ENCODE measurements at regions of chr9 and their contacts with region 1.

Region 1: DNA sequence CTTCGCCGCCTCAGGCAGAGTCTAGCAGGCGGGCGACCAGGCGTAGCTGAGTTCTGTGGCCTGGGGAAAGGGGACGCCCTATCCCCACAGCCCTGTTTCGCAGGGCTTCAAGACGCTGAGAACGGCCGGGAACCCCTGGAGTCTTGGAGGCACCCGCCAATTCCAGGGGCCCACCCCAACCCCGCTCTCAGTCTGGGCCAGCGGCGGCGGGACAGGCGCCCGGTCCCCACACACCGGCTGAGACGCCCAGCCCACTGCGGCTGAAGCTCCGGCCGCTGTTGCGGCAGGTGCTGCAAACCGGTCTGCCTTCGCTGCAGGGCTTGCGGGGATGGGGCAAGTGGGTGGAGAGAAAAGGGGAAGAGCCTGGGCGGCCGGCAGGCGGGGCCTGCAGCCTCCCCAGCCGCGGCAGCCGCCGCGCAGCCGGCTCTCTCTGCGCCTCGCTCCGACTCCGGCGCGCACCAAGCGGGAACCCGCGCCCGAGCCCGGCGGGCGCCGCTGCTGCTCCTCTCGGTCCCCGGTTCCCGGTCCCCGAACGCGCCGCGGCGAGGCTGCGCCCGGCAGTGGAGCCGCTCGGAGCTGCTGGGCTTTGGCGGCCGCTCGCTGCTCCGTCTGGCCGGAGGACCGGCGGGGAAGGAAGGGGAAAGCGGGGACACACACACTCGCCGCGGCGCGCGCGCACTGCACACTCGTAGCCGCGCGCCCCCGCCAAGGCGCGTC is at the start of gene PIP5K1B:
- DNase-seq: peak; percentile 18 to 39
- ATAC-seq: peak; percentile 81 to 90
- H3K4me3 ChIP-seq: peak within 1 kb of the TSS; percentile 67 to 79 (median 76)
- H3K27ac ChIP-seq: peak within 1 kb of the TSS; percentile 67 to 79 (median 76)
- H3K4me1 ChIP-seq: peaks cover 9 to 11% of the 10 kb centered on the region in 2 donors
- H3K27me3 ChIP-seq: no peaks in the 10 kb centered on the region
- CTCF ChIP-seq: peak in 1 of 5 experiments; percentile 23
- POLR2A ChIP-seq: peak in 1 of 2 donors; percentile 57
- total RNA-seq, gene PIP5K1B: 1.2 to 2.6 (median 2.0) TPM

Region 2: GRCh38 chr9:68779558-68780384 is 74.8 kb after region 1 on chr9:
- in situ Hi-C with region 1: no loop called
- intact Hi-C with region 1: loop called (anchors 5 kb)
- DNase-seq: peak; percentile 87 to 91
- ATAC-seq: peak; percentile 87 to 89
- H3K4me3 ChIP-seq: peak overlapping the region; percentile 88 to 93 (median 91)
- H3K27ac ChIP-seq: peak overlapping the region; percentile 87 to 96 (median 93)
- H3K4me1 ChIP-seq: peaks cover 51 to 69% of the 10 kb centered on the region in 2 donors
- H3K27me3 ChIP-seq: no peaks in the 10 kb centered on the region
- CTCF ChIP-seq: peak in 4 of 5 experiments; percentile 25 to 41 (median 38)
- POLR2A ChIP-seq: peak; percentile 84 to 87

Region 3: GRCh38 chr9:68844631-68845612 is 139.9 kb after region 1 on chr9:
- in situ Hi-C with region 1: no loop called
- intact Hi-C with region 1: loop called (anchors 10 kb)
- DNase-seq: no peak
- ATAC-seq: no peak
- H3K4me3 ChIP-seq: no peak overlapping the region
- H3K27ac ChIP-seq: no peak overlapping the region
- H3K4me1 ChIP-seq: peaks cover 7 to 13% of the 10 kb centered on the region in 2 donors
- H3K27me3 ChIP-seq: no peaks in the 10 kb centered on the region
- CTCF ChIP-seq: peak; percentile 12 to 55 (median 40)
- POLR2A ChIP-seq: no peak

Region 4: GRCh38 chr9:68912561-68912960 is 207.6 kb after region 1 on chr9:
- in situ Hi-C with region 1: no loop called
- intact Hi-C with region 1: no loop called
- DNase-seq: no peak
- ATAC-seq: no peak
- H3K4me3 ChIP-seq: no peak overlapping the region
- H3K27ac ChIP-seq: no peak overlapping the region
- H3K4me1 ChIP-seq: peaks cover 0 to 3% of the 10 kb centered on the region in 2 donors
- H3K27me3 ChIP-seq: no peaks in the 10 kb centered on the region
- CTCF ChIP-seq: no peak
- POLR2A ChIP-seq: no peak

Region 5: GRCh38 chr9:68999393-69000105 is 294.6 kb after region 1 on chr9:
- in situ Hi-C with region 1: no loop called
- intact Hi-C with region 1: no loop called
- DNase-seq: peak; percentile 27 to 48
- ATAC-seq: peak; percentile 66 to 92
- H3K4me3 ChIP-seq: no peak overlapping the region
- H3K27ac ChIP-seq: no peak overlapping the region
- H3K4me1 ChIP-seq: no peaks in the 10 kb centered on the region
- H3K27me3 ChIP-seq: no peaks in the 10 kb centered on the region
- CTCF ChIP-seq: peak in 4 of 5 experiments; percentile 44 to 79 (median 62)
- POLR2A ChIP-seq: no peak

Measured in gastrocnemius medialis (tissue), 4 donors.